KBM-7 (cell line): ENCODE measurements at regions of chr13 and their contacts with region 1.

Region 1: DNA sequence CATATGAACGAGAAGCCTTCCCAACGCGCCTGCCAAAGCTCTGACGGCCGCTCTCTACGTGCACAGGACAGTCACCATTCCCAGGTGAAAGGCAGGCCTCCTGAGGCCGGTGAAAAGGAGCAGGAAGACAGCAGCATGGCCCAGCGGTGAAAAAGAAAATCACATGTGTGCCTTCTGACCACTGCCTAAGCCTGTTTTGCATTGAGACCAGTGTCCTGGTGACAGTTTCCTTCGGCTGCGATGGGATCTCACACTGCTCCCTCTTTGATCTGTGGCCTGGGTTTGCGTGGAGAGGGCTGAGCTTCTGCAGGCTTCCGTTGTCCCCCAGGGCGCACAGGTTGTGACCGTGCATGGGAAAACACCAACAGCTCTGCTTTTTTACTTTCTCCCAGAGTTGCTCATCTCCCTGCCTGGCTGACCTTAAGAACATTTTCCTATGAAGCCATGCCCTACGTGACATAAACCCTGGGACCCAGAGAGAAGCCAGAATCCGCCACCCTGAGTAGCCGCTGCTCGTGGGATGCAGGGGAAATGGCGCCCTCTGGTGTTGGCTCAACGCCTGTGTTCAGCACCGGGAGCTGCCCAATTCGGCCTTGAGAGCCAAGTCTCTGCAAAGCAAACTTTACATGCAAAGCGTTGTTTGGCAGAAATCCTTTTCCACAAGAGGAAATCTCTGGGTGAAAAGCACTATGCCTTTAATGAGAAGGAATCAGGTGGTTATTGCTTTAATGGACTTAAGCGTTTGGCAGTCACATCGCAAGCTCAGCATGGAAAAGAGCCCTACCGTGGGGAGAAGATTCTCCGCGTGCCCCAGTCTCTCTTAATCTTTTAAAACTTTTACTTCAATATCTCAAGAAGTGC is 112.2 kb upstream of the GPR12 start:
- DNase-seq: peak; percentile 70

Region 2: GRCh38 chr13:26561651-26562511 is 310.9 kb before region 1 on chr13:
- in situ Hi-C with region 1: no loop called
- DNase-seq: no peak

Region 3: DNA sequence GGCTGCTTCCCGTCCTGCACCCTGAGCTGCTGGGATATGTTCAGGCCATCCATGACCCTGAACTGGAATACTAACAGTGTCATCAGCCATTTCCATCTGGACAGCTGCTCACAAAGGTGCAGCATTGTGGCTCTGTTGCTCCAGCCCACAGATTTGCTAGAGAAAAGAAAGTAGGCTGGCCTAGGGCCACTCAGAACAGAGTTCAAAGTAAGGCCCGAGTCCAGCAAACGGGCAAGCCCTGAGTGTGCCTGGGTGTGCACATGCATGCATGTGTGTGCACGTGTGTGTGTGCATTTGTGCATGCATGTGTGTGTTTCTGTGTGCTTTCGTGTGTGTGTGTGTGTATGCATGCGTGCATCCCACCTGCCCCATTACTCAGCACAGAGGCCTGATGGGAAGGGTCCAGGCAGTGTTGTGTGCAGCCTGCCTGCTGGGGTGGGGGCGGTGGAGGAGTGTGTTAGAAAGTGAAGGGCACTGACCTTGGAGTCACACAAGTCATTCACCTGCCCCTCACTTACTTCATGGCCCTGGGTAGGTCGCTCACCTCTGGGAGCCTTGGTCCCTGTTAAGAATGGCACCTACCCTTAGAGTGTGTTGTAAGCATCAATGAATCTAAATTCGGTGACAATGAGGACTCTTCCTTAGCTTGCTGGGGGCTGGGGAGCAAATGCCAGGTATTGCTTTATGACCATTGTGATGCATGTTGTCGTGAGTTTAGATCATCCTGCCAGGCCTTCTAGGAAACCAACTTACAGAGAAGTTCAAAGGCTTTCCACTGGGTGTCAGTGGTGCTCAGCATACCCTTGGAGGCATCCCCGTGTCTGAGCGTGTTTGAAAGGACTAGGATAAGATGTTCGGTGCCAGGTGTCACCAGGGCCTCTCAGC is 165.4 kb before region 1 on chr13:
- in situ Hi-C with region 1: loop called (anchors 25 kb)
- DNase-seq: peak; percentile 76